WTC11 (cell line): ENCODE measurements at regions of chr1 and their contacts with region 1.

Region 1: GRCh38 chr1:156927215-156928042 is 7.0 kb downstream of the LRRC71 start:
- DNase-seq: peak; percentile 92
- ATAC-seq: peak; percentile 83
- H3K4me3 Mint-ChIP-seq: peak overlapping the region; percentile 68
- H3K27ac Mint-ChIP-seq: no peak overlapping the region
- H3K4me1 Mint-ChIP-seq: peaks cover 21% of the 10 kb centered on the region
- H3K27me3 Mint-ChIP-seq: peaks cover 91% of the 10 kb centered on the region
- CTCF ChIP-seq: peak; percentile 52; the same call in 1 of the 2 replicates

Region 2: DNA sequence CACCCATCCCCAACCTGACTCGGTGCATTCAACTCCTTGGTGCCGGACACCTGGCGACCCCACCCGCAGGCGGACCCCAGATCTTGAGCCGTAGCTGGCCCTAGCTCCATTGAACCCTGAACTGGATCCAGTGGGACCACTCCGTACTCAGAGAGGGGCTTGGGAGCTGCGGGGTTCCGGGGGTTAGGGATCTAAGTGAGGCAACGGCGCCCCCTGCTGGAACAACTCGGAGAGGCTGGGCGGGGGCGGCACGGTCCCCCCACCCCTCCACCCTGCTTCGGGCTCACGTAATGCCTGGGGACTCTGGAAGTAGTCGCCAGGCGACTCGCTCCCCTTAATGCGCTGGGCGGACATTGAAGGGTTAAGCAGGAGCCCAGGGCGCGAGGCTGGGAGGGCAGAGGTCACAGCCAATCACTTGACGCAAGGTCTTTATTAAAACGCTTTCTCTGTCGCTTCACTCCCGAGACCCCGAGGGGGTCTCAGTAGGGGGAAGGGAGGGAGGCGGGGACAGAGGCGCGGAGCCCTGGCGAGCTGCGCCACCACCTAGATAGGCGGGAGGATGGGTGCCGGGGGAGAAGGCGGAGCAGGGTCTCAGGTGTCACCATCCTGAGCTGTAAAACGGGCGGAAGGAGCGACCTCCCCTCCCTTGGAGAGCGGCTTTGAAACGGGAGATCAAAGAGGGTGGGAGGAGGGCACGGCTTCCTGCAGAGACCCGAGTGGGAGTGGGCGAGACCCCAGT is 221.3 kb before region 1 on chr1:
- CTCF ChIA-PET with region 1: interaction called, 19 read pairs
- POLR2A ChIA-PET with region 1: no interaction called
- DNase-seq: peak; percentile 94
- ATAC-seq: peak; percentile 45
- H3K4me3 Mint-ChIP-seq: peak overlapping the region; percentile 84
- H3K27ac Mint-ChIP-seq: peak overlapping the region; percentile 96
- H3K4me1 Mint-ChIP-seq: peaks cover 62% of the 10 kb centered on the region
- H3K27me3 Mint-ChIP-seq: peaks cover 23% of the 10 kb centered on the region
- CTCF ChIP-seq: peak; percentile 96

Region 3: GRCh38 chr1:156838981-156839410 is 88.4 kb before region 1 on chr1:
- CTCF ChIA-PET with region 1: interaction called, 47 read pairs
- POLR2A ChIA-PET with region 1: no interaction called
- DNase-seq: peak; percentile 67
- ATAC-seq: peak; percentile 83
- H3K4me3 Mint-ChIP-seq: no peak overlapping the region
- H3K27ac Mint-ChIP-seq: no peak overlapping the region
- H3K4me1 Mint-ChIP-seq: peaks cover 5% of the 10 kb centered on the region
- H3K27me3 Mint-ChIP-seq: peaks cover 61% of the 10 kb centered on the region
- CTCF ChIP-seq: peak; percentile 87

Region 4: GRCh38 chr1:156876281-156876680 is 51.1 kb before region 1 on chr1:
- CTCF ChIA-PET with region 1: interaction called, 20 read pairs
- POLR2A ChIA-PET with region 1: no interaction called
- DNase-seq: peak; percentile 76
- ATAC-seq: peak; percentile 96
- H3K4me3 Mint-ChIP-seq: peak overlapping the region; percentile 13; the same call in 1 of the 2 replicates
- H3K27ac Mint-ChIP-seq: no peak overlapping the region
- H3K4me1 Mint-ChIP-seq: peaks cover 4% of the 10 kb centered on the region
- H3K27me3 Mint-ChIP-seq: peaks cover 32% of the 10 kb centered on the region
- CTCF ChIP-seq: 0 out of 2 replicates have a peak, but pooled peaks have one; percentile 17

Region 5: GRCh38 chr1:156892190-156893047 is 35.0 kb before region 1 on chr1:
- CTCF ChIA-PET with region 1: interaction called, 233 read pairs
- POLR2A ChIA-PET with region 1: no interaction called
- DNase-seq: peak; percentile 96
- ATAC-seq: peak; percentile 78
- H3K4me3 Mint-ChIP-seq: peak overlapping the region; percentile 72
- H3K27ac Mint-ChIP-seq: no peak overlapping the region
- H3K4me1 Mint-ChIP-seq: peaks cover 24% of the 10 kb centered on the region
- H3K27me3 Mint-ChIP-seq: peaks cover 76% of the 10 kb centered on the region
- CTCF ChIP-seq: peak; percentile 72

Region 6: GRCh38 chr1:156948708-156949107 is 21.3 kb after region 1 on chr1:
- CTCF ChIA-PET with region 1: interaction called, 11 read pairs
- POLR2A ChIA-PET with region 1: no interaction called
- DNase-seq: peak; percentile 45
- ATAC-seq: peak; percentile 89
- H3K4me3 Mint-ChIP-seq: no peak overlapping the region
- H3K27ac Mint-ChIP-seq: no peak overlapping the region
- H3K4me1 Mint-ChIP-seq: no peaks in the 10 kb centered on the region
- H3K27me3 Mint-ChIP-seq: no peaks in the 10 kb centered on the region
- CTCF ChIP-seq: no peak

Region 7: DNA sequence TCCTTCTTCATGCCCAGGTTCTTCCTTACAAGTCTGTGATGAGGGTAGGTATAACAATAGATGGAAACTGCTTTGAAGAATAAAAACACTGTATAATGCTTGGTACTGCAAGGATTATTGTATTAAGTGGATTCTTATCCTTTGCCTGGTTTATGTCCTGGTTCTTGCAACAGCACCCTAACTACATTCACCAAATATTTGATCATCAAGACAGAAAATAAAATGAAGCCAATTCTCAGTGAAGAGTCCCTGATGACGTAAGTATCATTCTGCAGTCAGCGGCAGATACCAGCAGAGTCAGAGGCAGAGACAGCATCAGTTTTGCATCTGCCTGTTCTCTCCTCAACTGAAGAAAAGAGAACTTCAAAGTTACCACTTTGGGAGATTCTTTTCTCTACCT is 98.4 kb after region 1 on chr1:
- CTCF ChIA-PET with region 1: no interaction called
- POLR2A ChIA-PET with region 1: no interaction called
- DNase-seq: no peak
- ATAC-seq: no peak
- H3K4me3 Mint-ChIP-seq: no peak overlapping the region
- H3K27ac Mint-ChIP-seq: no peak overlapping the region
- H3K4me1 Mint-ChIP-seq: peaks cover 8% of the 10 kb centered on the region; the same call in 1 of the 2 replicates
- H3K27me3 Mint-ChIP-seq: no peaks in the 10 kb centered on the region
- CTCF ChIP-seq: no peak